Naive thymus-derived CD4-positive, alpha-beta T cell (primary cell): ENCODE measurements at regions of chr18 and their contacts with region 1.

Region 1: GRCh38 chr18:2932247-2933181 is 80.4 kb downstream of the LPIN2 start:
- DNase-seq: peak in 7 of 9 donors; percentile 60 to 79 (median 73)
- ATAC-seq: peak; percentile 84
- H3K4me3 ChIP-seq: no peak overlapping the region
- H3K4me3 Mint-ChIP-seq: peak overlapping the region in 8 of 10 donors; percentile 1 to 30 (median 10)
- H3K27ac ChIP-seq: peak overlapping the region; percentile 49
- H3K27ac Mint-ChIP-seq: peak overlapping the region; percentile 68 to 95 (median 89)
- H3K4me1 ChIP-seq: peaks cover 7 to 8% of the 10 kb centered on the region in 2 donors
- H3K4me1 Mint-ChIP-seq: peaks cover 14 to 49% (median 33%) of the 10 kb centered on the region in 7 donors
- H3K27me3 ChIP-seq: no peaks in the 10 kb centered on the region
- H3K27me3 Mint-ChIP-seq: no peaks in the 10 kb centered on the region

Region 2: DNA sequence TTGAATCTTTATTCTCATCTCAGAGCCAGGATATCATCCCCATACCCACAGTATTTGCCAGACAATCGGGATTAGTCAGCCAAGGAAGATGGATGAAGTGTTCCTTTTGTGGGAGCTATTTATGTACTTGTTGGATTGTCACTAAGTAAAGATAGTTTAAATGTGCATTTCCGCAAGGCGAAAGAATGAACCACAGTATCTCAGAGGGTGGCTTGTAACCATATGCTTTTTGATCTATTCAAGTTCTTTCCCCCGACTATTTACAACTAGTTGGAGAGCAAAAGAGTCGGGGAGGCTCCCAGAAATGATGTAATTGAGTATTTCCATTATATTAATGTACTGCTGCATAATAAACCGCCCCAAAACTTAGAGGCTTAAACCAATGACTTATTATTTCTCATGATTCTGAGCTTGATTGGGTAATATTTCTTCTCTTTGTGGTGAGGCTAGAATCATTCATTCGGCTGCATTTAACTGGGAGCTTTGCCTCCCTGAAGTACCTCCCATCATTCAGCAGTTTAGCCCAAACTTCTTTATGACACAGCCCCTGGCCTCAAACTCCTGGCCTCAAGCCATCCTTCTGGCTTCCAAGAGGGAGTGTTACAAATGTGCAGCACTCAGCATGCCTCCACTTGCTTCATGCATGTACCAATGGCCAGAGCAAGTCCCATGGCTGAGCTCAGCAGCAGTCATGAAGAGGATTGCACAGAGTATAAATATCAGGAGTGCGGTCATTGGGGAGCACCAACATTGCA is 784.9 kb before region 1 on chr18:
- CTCF ChIA-PET with region 1: no interaction called
- POLR2A ChIA-PET with region 1: no interaction called
- intact Hi-C with region 1: no loop called
- DNase-seq: no peak
- ATAC-seq: no peak
- H3K4me3 ChIP-seq: no peak overlapping the region
- H3K4me3 Mint-ChIP-seq: no peak overlapping the region
- H3K27ac ChIP-seq: no peak overlapping the region
- H3K27ac Mint-ChIP-seq: no peak overlapping the region
- H3K4me1 ChIP-seq: no peaks in the 10 kb centered on the region
- H3K4me1 Mint-ChIP-seq: no peaks in the 10 kb centered on the region
- H3K27me3 ChIP-seq: no peaks in the 10 kb centered on the region
- H3K27me3 Mint-ChIP-seq: peaks cover 0 to 22% (median 4%) of the 10 kb centered on the region in 5 donors

Region 3: DNA sequence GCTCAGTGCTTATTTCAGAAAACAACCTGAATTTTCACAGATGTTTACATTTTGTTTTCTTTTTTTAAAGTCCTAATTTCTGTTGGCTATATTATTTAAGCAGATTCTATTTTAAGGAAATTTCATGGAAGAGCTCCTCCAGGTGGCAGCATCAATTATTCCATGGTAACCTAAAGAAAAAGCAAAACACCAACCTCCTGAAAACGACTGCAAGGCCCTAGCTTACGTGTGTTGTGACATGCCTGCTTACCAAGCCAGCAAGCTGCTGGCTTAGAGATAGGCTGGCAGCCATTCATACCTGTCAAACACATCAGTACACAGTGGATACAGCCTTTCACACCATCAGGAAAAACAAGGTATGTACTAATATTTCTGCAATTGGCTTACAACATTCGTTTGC is 15.5 kb after region 1 on chr18:
- CTCF ChIA-PET with region 1: interaction called, 8 read pairs
- POLR2A ChIA-PET with region 1: interaction called, 4 read pairs
- intact Hi-C with region 1: loop called in 1 of 2 experiments (anchors 1 kb)
- DNase-seq: no peak
- ATAC-seq: no peak
- H3K4me3 ChIP-seq: no peak overlapping the region
- H3K4me3 Mint-ChIP-seq: no peak overlapping the region
- H3K27ac ChIP-seq: no peak overlapping the region
- H3K27ac Mint-ChIP-seq: peak overlapping the region in 5 of 9 donors; percentile 19 to 74 (median 35)
- H3K4me1 ChIP-seq: peaks cover 3 to 24% of the 10 kb centered on the region in 2 donors
- H3K4me1 Mint-ChIP-seq: peaks cover 16 to 81% (median 66%) of the 10 kb centered on the region in 7 donors
- H3K27me3 ChIP-seq: no peaks in the 10 kb centered on the region
- H3K27me3 Mint-ChIP-seq: no peaks in the 10 kb centered on the region

Region 4: DNA sequence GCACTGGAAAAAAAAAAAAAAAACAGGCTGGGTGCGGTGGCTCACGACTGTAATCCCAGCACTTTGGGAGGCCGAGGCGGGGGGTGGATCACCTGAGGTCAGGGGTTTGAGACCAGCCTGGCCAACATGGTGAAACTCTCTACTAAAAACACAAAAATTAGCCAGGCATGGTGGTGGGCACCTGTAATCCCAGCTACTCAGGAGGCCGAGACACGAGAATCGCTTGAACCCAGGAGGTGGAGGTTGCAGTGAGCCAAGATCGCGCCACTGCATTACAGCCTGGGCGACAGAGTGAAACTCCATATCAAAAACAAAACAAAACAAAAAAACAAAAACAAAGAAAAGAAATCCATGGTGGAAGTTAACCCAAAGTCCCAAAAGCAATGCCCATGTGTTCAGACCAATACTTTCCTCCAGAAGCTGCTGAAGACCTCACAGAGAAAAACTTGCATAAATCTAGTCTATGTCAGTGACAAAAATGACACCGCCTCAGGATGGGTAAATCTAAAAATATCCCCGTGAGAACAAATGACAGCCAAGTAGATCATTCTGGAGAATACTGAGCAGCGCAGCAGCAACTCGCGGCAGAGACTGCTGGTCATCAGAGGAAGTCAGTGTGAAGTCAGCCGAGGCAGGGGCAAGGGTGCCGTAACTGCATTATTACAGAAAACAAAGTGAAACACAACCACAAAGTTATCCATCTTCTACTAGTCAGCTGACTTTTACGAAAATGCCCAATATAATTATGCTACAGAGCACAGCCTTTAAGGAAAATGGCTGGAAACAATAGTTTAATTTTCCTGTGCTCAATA is 39.4 kb after region 1 on chr18:
- CTCF ChIA-PET with region 1: interaction called, 10 read pairs
- POLR2A ChIA-PET with region 1: interaction called, 5 read pairs
- intact Hi-C with region 1: no loop called
- DNase-seq: peak in 7 of 9 donors; percentile 40 to 80 (median 62)
- ATAC-seq: peak; percentile 84
- H3K4me3 ChIP-seq: peak overlapping the region; percentile 45
- H3K4me3 Mint-ChIP-seq: peak overlapping the region; percentile 75 to 93 (median 88)
- H3K27ac ChIP-seq: peak overlapping the region; percentile 76
- H3K27ac Mint-ChIP-seq: peak overlapping the region; percentile 90 to 99 (median 96)
- H3K4me1 ChIP-seq: peaks cover 75 to 82% of the 10 kb centered on the region in 2 donors
- H3K4me1 Mint-ChIP-seq: peaks cover 63 to 97% (median 93%) of the 10 kb centered on the region in 7 donors
- H3K27me3 ChIP-seq: no peaks in the 10 kb centered on the region
- H3K27me3 Mint-ChIP-seq: no peaks in the 10 kb centered on the region

Region 5: GRCh38 chr18:2978646-2979045 is 46.1 kb after region 1 on chr18:
- CTCF ChIA-PET with region 1: interaction called, 150 read pairs
- POLR2A ChIA-PET with region 1: interaction called, 29 read pairs
- intact Hi-C with region 1: no loop called
- DNase-seq: no peak
- ATAC-seq: no peak
- H3K4me3 ChIP-seq: peak overlapping the region; percentile 69
- H3K4me3 Mint-ChIP-seq: peak overlapping the region; percentile 34 to 94 (median 84)
- H3K27ac ChIP-seq: peak overlapping the region; percentile 76
- H3K27ac Mint-ChIP-seq: peak overlapping the region; percentile 83 to 98 (median 91)
- H3K4me1 ChIP-seq: peaks cover 48 to 57% of the 10 kb centered on the region in 2 donors
- H3K4me1 Mint-ChIP-seq: peaks cover 57 to 85% (median 76%) of the 10 kb centered on the region in 7 donors
- H3K27me3 ChIP-seq: no peaks in the 10 kb centered on the region
- H3K27me3 Mint-ChIP-seq: no peaks in the 10 kb centered on the region

Region 6: DNA sequence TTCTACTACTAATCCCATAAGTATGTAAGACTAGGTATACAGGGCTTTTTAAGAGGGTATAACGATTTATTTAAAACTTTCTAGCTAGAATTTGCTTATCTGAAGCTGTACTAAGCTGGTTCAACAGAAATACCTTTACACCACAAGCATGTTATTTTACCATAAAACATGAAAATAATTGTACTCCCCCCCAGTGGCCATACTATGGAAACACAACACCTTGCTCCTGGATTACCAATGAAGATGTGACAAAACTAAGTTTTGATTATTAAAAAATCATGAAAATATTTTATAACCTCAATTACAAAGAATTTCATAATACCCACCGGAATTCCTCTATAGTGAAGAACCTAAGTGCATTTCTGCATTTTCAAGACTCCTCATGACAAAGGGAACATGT is 53.1 kb after region 1 on chr18:
- CTCF ChIA-PET with region 1: interaction called, 150 read pairs
- POLR2A ChIA-PET with region 1: interaction called, 29 read pairs
- intact Hi-C with region 1: loop called (anchors 1 kb)
- DNase-seq: peak in 7 of 9 donors; percentile 56 to 75 (median 66)
- ATAC-seq: peak; percentile 79
- H3K4me3 ChIP-seq: no peak overlapping the region
- H3K4me3 Mint-ChIP-seq: peak overlapping the region in 1 of 10 donors; percentile 27
- H3K27ac ChIP-seq: no peak overlapping the region
- H3K27ac Mint-ChIP-seq: peak overlapping the region in 7 of 9 donors; percentile 0 to 98 (median 67)
- H3K4me1 ChIP-seq: peaks cover 19 to 41% of the 10 kb centered on the region in 2 donors
- H3K4me1 Mint-ChIP-seq: peaks cover 34 to 80% (median 73%) of the 10 kb centered on the region in 7 donors
- H3K27me3 ChIP-seq: no peaks in the 10 kb centered on the region
- H3K27me3 Mint-ChIP-seq: no peaks in the 10 kb centered on the region

Region 7: GRCh38 chr18:2994603-2995432 is 62.3 kb after region 1 on chr18:
- CTCF ChIA-PET with region 1: interaction called, 150 read pairs
- POLR2A ChIA-PET with region 1: interaction called, 7 read pairs
- intact Hi-C with region 1: no loop called
- DNase-seq: peak; percentile 57 to 83 (median 77)
- ATAC-seq: peak; percentile 92
- H3K4me3 ChIP-seq: peak overlapping the region; percentile 35
- H3K4me3 Mint-ChIP-seq: peak overlapping the region; percentile 41 to 80 (median 68)
- H3K27ac ChIP-seq: peak overlapping the region; percentile 62
- H3K27ac Mint-ChIP-seq: peak overlapping the region; percentile 54 to 91 (median 84)
- H3K4me1 ChIP-seq: peaks cover 38 to 47% of the 10 kb centered on the region in 2 donors
- H3K4me1 Mint-ChIP-seq: peaks cover 48 to 87% (median 83%) of the 10 kb centered on the region in 7 donors
- H3K27me3 ChIP-seq: no peaks in the 10 kb centered on the region
- H3K27me3 Mint-ChIP-seq: no peaks in the 10 kb centered on the region

Region 8: GRCh38 chr18:3151399-3152264 is 219.1 kb after region 1 on chr18:
- CTCF ChIA-PET with region 1: interaction called, 7 read pairs
- POLR2A ChIA-PET with region 1: no interaction called
- intact Hi-C with region 1: loop called (anchors 1 kb)
- DNase-seq: peak in 7 of 9 donors; percentile 12 to 50 (median 31)
- ATAC-seq: peak; percentile 45
- H3K4me3 ChIP-seq: no peak overlapping the region
- H3K4me3 Mint-ChIP-seq: no peak overlapping the region
- H3K27ac ChIP-seq: no peak overlapping the region
- H3K27ac Mint-ChIP-seq: peak overlapping the region in 2 of 9 donors; percentile 23 to 34
- H3K4me1 ChIP-seq: peaks cover 0 to 3% of the 10 kb centered on the region in 2 donors
- H3K4me1 Mint-ChIP-seq: peaks cover 3 to 12% (median 7%) of the 10 kb centered on the region in 7 donors
- H3K27me3 ChIP-seq: no peaks in the 10 kb centered on the region
- H3K27me3 Mint-ChIP-seq: peaks cover 0 to 8% (median 0%) of the 10 kb centered on the region in 5 donors